H1 (cell line): ENCODE measurements at regions of chr1 and their contacts with region 1.

Region 1: GRCh38 chr1:15062479-15063099 is 91.0 kb upstream of the TMEM51 start:
- DNase-seq: peak in 1 of 2 experiments; percentile 71
- H3K4me3 ChIP-seq: no peak overlapping the region
- H3K27ac ChIP-seq: no peak overlapping the region
- H3K4me1 ChIP-seq: no peaks in the 10 kb centered on the region; a peak in 1 of 7 replicates
- H3K27me3 ChIP-seq: no peaks in the 10 kb centered on the region
- CTCF ChIP-seq: peak in 2 of 3 experiments; percentile 60 to 75; a peak in 3 of 4 replicates
- EP300 ChIP-seq: no peak
- POLR2A ChIP-seq: no peak
- RAD21 ChIP-seq: peak; percentile 58 to 68

Region 2: DNA sequence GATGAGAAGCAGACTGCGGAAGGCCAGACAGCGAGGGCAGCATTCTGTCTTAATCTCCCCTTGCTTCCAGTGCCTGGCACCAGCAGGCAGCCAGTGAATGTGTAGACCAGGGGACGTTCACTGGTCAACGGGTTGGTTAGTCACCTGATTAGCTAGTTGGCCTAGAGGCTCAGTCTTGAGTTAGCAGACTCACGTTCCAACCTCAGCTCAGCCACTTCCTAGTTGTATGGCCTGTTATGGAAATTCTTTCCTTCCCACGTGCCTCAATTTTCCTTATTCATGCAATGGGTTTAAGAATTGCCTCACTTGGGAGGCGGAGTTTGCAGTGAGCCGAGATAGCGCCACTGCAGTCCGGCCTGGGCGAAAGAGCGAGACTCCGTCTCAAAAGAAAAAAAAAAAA is 158.7 kb before region 1 on chr1:
- CTCF ChIA-PET with region 1: no interaction called
- POLR2A ChIA-PET with region 1: no interaction called
- DNase-seq: no peak
- H3K4me3 ChIP-seq: no peak overlapping the region
- H3K27ac ChIP-seq: no peak overlapping the region
- H3K4me1 ChIP-seq: no peaks in the 10 kb centered on the region
- H3K27me3 ChIP-seq: no peaks in the 10 kb centered on the region
- CTCF ChIP-seq: no peak
- EP300 ChIP-seq: no peak
- POLR2A ChIP-seq: no peak
- RAD21 ChIP-seq: no peak

Region 3: DNA sequence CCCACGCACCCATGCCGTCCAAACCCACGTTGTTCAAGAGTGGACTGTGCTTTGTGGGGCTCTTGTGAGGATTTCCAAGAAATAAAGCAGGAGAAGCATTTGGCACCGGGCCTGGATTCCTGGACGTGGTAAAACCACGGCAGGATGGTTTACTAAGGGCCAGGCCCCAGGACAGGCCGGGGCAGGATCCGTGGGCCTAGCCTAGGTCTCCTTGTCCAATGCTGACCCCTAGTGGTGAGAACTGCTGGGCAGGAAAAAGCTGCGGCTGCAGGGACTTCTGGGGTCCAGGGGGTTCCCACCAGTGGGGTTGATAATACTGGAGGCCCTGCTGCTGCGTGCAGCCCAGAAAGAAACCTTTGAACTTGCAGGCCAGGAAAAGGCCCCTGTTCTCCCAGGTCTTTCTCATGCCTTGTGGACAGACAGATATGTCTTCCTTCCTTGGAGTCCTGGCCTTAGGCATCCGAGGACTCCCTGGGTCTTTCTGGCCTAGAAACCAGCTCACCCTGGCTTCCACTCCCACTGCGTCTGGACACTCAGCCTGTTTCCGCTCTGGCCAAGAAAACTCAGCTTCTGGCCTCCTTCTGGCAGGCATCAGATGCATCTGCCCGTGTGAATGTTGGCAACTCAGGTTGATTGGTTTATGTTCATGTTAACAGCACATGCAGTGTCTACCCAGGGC is 16.0 kb before region 1 on chr1:
- CTCF ChIA-PET with region 1: interaction called, 53 read pairs
- POLR2A ChIA-PET with region 1: no interaction called
- DNase-seq: peak; percentile 36 to 94
- H3K4me3 ChIP-seq: no peak overlapping the region
- H3K27ac ChIP-seq: no peak overlapping the region
- H3K4me1 ChIP-seq: no peaks in the 10 kb centered on the region
- H3K27me3 ChIP-seq: no peaks in the 10 kb centered on the region
- CTCF ChIP-seq: peak; percentile 87 to 95 (median 92)
- EP300 ChIP-seq: no peak
- POLR2A ChIP-seq: no peak
- RAD21 ChIP-seq: peak; percentile 98 to 99

Region 4: GRCh38 chr1:15075817-15076216 is 13.2 kb after region 1 on chr1:
- CTCF ChIA-PET with region 1: interaction called, 43 read pairs
- POLR2A ChIA-PET with region 1: no interaction called
- DNase-seq: no peak
- H3K4me3 ChIP-seq: no peak overlapping the region
- H3K27ac ChIP-seq: no peak overlapping the region
- H3K4me1 ChIP-seq: no peaks in the 10 kb centered on the region
- H3K27me3 ChIP-seq: no peaks in the 10 kb centered on the region
- CTCF ChIP-seq: no peak
- EP300 ChIP-seq: no peak
- POLR2A ChIP-seq: no peak
- RAD21 ChIP-seq: no peak

Region 5: GRCh38 chr1:15090373-15090772 is 27.8 kb after region 1 on chr1:
- CTCF ChIA-PET with region 1: interaction called, 13 read pairs
- POLR2A ChIA-PET with region 1: no interaction called
- DNase-seq: peak; percentile 25 to 80
- H3K4me3 ChIP-seq: no peak overlapping the region; a peak in 1 of 8 replicates
- H3K27ac ChIP-seq: 0 out of 2 replicates have a peak overlapping the region, but pooled peaks have one; percentile 20
- H3K4me1 ChIP-seq: peaks cover 4 to 14% (median 5%) of the 10 kb centered on the region in 4 experiments
- H3K27me3 ChIP-seq: no peaks in the 10 kb centered on the region; a peak in 2 of 7 replicates
- CTCF ChIP-seq: no peak; a peak in 1 of 4 replicates
- EP300 ChIP-seq: no peak
- POLR2A ChIP-seq: no peak
- RAD21 ChIP-seq: no peak; a peak in 1 of 4 replicates